Endothelial cell of umbilical vein (primary cell): ENCODE measurements at regions of chr12 and their contacts with region 1.

Region 1: GRCh38 chr12:48618541-48618940 is 48.7 kb upstream of the LALBA start:
- DNase-seq: peak; percentile 75
- H3K4me3 ChIP-seq: no peak overlapping the region
- H3K27ac ChIP-seq: no peak overlapping the region
- H3K4me1 ChIP-seq: no peaks in the 10 kb centered on the region
- H3K27me3 ChIP-seq: peaks cover 12 to 15% of the 10 kb centered on the region in 2 experiments
- CTCF ChIP-seq: peak; percentile 93 to 95
- POLR2A ChIP-seq: no peak

Region 2: DNA sequence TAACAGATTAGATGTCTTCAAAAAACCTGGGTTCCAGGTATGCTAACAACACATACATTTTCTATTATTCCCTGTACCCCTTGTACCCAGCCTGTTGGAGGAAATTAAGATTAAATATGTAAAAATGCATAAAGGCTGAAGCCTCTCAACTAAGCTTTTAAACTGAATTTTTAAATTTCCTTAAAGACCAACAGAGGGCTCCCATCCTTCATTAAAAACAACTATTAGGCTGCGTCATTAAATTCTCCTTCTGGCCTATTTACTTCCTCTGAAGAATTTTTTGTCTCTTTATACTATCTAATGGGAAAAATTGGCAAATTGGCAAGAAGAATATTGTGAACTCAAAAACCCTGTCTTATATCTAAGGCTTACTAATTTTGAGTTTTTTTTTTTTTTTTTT is 534.5 kb before region 1 on chr12:
- CTCF ChIA-PET with region 1: interaction called, 18 read pairs
- POLR2A ChIA-PET with region 1: no interaction called
- dilution Hi-C with region 1: no loop called
- intact Hi-C with region 1: loop called (anchors 5 kb)
- DNase-seq: peak; percentile 15
- H3K4me3 ChIP-seq: no peak overlapping the region
- H3K27ac ChIP-seq: no peak overlapping the region
- H3K4me1 ChIP-seq: no peaks in the 10 kb centered on the region
- H3K27me3 ChIP-seq: no peaks in the 10 kb centered on the region
- CTCF ChIP-seq: no peak
- POLR2A ChIP-seq: no peak

Region 3: GRCh38 chr12:48165094-48165981 is 453.2 kb before region 1 on chr12:
- CTCF ChIA-PET with region 1: interaction called, 4 read pairs
- POLR2A ChIA-PET with region 1: no interaction called
- dilution Hi-C with region 1: no loop called
- intact Hi-C with region 1: loop called (anchors 5 kb)
- DNase-seq: peak; percentile 67
- H3K4me3 ChIP-seq: no peak overlapping the region
- H3K27ac ChIP-seq: no peak overlapping the region
- H3K4me1 ChIP-seq: no peaks in the 10 kb centered on the region
- H3K27me3 ChIP-seq: peaks cover 10 to 23% of the 10 kb centered on the region in 2 experiments
- CTCF ChIP-seq: peak; percentile 62 to 80
- POLR2A ChIP-seq: no peak

Region 4: GRCh38 chr12:48197971-48198671 is 420.4 kb before region 1 on chr12:
- CTCF ChIA-PET with region 1: interaction called, 15 read pairs
- POLR2A ChIA-PET with region 1: no interaction called
- dilution Hi-C with region 1: no loop called
- intact Hi-C with region 1: no loop called
- DNase-seq: peak; percentile 94
- H3K4me3 ChIP-seq: peak overlapping the region; percentile 23 to 71 (median 44)
- H3K27ac ChIP-seq: peak overlapping the region; percentile 67
- H3K4me1 ChIP-seq: peaks cover 10% of the 10 kb centered on the region
- H3K27me3 ChIP-seq: peaks cover 0 to 19% of the 10 kb centered on the region in 2 experiments
- CTCF ChIP-seq: no peak
- POLR2A ChIP-seq: peak; percentile 96

Region 5: GRCh38 chr12:48542300-48542928 is 76.1 kb before region 1 on chr12:
- CTCF ChIA-PET with region 1: interaction called, 166 read pairs
- POLR2A ChIA-PET with region 1: no interaction called
- dilution Hi-C with region 1: no loop called
- intact Hi-C with region 1: loop called (anchors 1 kb)
- DNase-seq: peak; percentile 41
- H3K4me3 ChIP-seq: no peak overlapping the region
- H3K27ac ChIP-seq: no peak overlapping the region
- H3K4me1 ChIP-seq: no peaks in the 10 kb centered on the region
- H3K27me3 ChIP-seq: peaks cover 2 to 4% of the 10 kb centered on the region in 2 experiments
- CTCF ChIP-seq: peak; percentile 64 to 76
- POLR2A ChIP-seq: no peak

Region 6: GRCh38 chr12:48631057-48631456 is 12.5 kb after region 1 on chr12:
- CTCF ChIA-PET with region 1: interaction called, 12 read pairs
- POLR2A ChIA-PET with region 1: no interaction called
- dilution Hi-C with region 1: no loop called
- intact Hi-C with region 1: no loop called
- DNase-seq: no peak
- H3K4me3 ChIP-seq: no peak overlapping the region
- H3K27ac ChIP-seq: no peak overlapping the region
- H3K4me1 ChIP-seq: no peaks in the 10 kb centered on the region
- H3K27me3 ChIP-seq: peaks cover 17 to 18% of the 10 kb centered on the region in 2 experiments
- CTCF ChIP-seq: no peak
- POLR2A ChIP-seq: no peak